PC-9 (cell line): ENCODE measurements at regions of chr14 and their contacts with region 1.

Region 1: DNA sequence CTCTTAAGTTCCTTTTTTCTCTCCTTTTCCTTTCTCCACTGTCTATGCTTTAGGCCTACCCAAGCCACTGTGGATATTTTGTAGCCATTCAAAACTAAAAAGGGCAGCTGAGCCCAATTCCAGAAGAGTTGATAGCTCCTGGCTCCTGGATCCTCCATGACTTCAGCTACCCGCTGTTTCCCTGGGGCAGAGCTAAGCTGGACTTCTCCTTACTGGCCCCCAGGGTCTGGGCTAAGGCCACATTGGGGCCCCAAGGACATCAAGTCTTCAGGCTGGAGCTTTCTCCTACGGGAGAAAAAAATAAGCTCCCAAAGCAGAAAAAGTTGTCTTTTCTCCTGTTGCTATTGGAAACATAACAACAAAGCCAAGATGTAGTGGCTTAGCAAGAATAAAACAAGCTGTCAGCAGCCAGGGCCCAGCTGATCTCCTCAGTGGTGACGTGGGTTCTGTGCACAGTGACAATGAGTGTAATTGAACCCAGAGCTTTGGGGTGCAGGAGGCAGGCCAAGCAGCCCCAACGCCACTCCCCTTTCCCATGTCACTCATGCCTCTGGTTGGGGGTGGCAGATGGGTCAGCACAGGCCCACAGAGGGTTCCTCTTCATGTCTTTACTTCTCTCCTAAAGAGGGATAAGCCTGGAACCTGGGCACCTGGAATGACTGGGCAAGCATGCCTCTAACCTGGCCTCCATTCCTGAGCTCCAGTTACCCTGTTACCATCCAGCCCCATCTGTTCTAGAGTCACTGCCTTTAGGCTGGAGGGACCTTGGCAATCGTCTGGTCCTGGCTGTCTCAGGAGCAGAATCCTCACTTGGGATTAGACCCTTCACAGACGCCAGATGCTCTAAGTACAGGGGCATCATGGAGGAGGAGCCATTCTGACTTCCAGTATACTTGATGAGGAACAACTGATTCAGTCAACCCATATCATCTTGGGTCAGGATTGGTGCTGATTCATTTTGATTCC is 171.2 kb downstream of the ZFP36L1 start:
- DNase-seq: peak in 1 of 2 experiments; percentile 35
- H3K4me3 ChIP-seq: no peak overlapping the region
- H3K27ac ChIP-seq: peak overlapping the region; percentile 80
- H3K4me1 ChIP-seq: peaks cover 49% of the 10 kb centered on the region
- H3K27me3 ChIP-seq: no peaks in the 10 kb centered on the region
- CTCF ChIP-seq: no peak

Region 2: DNA sequence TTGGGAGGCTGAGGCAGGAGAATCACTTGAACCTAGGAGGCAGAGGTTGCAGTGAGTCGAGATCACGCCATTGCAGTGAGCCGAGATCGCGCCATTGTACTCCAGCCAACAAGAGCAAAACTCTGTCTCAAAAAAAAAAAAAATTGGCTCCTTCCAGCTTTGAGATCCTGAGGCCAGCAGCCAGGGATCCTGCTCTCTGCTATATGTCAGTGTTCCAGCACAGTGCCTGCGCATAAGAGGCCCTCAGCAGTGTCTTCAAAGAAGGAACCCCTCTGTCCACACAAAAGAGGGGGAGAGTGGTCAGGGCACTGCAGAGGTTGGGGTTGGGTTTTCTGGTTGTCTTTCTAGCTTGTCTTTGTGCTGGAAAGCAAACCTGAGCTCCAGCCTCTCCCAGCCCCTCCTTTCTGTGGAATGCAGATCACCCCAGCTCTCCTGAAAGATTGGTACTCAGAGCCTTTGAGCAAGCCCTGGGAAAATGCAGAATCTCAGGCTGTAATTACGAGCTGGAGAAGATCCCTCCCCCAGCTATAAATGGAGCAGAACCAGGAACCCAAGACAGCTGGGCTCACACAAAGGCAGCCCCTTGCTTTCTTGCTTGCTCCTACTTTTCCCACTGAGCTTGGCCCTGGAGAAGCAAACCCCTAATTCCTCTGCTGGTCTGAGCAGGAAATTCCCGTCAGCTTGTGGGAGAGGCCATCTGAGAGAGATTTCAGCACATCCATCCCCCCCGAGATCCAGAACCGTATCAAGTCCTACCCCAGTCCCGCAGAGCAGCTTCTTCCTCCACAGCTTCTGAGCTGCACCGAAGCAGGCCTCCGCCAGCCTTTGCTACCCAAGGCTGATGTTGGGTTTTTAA is 34.6 kb before region 1 on chr14:
- CTCF ChIA-PET with region 1: no interaction called
- POLR2A ChIA-PET with region 1: interaction called, 13 read pairs
- intact Hi-C with region 1: no loop called
- DNase-seq: peak; percentile 45 to 47
- H3K4me3 ChIP-seq: no peak overlapping the region
- H3K27ac ChIP-seq: peak overlapping the region; percentile 10; the same call in 1 of the 2 replicates
- H3K4me1 ChIP-seq: peaks cover 34% of the 10 kb centered on the region
- H3K27me3 ChIP-seq: no peaks in the 10 kb centered on the region
- CTCF ChIP-seq: no peak

Region 3: DNA sequence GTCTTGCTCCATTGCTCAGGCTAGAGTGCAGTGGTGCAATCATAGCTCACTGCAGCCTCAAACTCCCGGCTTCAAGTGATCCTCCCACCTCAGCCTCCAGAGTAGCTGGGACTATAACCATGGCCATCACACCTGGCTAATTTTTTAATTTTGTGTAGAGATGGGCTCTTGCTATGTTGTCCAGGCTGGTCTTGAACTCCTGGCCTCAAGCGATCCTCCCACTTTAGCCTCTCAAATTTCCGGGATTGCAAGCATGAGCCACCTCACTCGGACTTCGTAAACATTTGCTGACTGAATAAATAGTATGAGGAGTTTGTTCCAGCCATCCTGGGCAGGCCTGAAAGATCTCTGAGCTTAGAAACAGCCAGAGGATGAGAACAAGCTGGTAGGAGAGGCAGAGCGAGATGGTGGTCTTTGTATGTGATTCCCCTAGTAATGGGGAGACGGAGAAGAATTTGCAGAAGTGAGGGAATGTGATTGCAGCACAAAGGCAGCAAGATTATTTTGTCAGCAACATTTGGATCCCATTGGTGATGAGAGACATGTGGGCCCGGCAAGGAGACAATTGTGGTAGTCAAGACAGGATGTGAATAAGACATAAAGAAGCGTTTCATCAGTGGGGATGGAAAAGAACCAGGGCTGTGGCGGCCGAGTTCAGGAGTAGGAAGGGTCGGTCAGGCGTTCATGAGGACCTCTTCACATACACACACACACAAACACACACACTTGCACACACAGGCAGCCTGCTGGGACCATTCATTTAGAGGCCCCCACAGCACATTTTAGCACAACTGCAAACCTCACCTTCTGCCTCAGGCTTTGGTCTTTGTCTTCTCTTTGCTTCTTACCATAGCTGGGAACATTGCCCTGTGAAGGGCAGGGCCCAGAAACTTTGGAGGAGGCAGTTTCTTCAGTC is 15.7 kb after region 1 on chr14:
- CTCF ChIA-PET with region 1: no interaction called
- POLR2A ChIA-PET with region 1: no interaction called
- intact Hi-C with region 1: no loop called
- DNase-seq: peak in 1 of 2 experiments; percentile 13
- H3K4me3 ChIP-seq: no peak overlapping the region
- H3K27ac ChIP-seq: no peak overlapping the region
- H3K4me1 ChIP-seq: no peaks in the 10 kb centered on the region
- H3K27me3 ChIP-seq: no peaks in the 10 kb centered on the region
- CTCF ChIP-seq: no peak